ENCODE measurements at regions of chr2 and their contacts with region 1.

Region 1: DNA sequence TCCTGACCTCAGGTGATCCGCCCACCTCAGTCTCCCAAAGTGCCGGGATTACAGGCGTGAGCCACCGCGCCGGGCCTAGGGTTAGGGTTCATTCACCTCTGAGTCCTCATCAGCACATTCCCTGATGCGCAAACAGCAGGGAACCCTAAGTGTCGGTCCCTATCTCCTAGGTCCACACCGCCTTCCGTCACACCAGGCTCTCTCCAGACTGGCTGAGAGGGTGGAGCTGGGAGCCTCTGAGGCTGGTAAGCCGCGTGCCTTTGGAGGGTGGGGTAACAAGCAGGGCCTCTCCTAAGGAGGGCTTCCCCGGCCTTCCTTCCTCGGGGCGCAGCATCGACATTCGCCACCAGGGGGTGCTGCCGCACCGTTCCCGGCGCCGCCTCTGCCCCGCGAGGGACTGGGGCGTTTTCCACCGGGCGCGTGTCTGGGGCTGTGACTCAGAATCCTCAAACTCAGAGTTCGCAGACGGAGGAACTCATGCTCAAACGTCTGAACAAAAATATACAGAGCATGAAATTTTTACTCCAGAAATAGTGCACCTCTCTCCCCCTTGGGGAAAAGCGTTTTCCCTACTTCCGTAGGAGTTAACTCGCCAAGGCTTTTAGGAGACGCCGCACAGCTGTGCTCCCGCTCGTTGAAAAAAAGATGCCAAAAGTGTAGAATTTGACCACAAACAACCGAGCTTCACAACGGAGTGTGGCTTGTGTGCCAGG is 63.9 kb upstream of the ASAP2 start:
- DNase-seq: peak; percentile 55
- ATAC-seq: peak; percentile 88
- H3K4me3 ChIP-seq: peak overlapping the region; percentile 57 to 73 (median 61)
- H3K27ac ChIP-seq: no peak overlapping the region
- H3K4me1 ChIP-seq: peaks cover 43% of the 10 kb centered on the region
- H3K27me3 ChIP-seq: peaks cover 3 to 29% of the 10 kb centered on the region in 2 experiments; a peak in 3 of 5 replicates
- CTCF ChIP-seq: peak; percentile 100
- EP300 ChIP-seq: 0 out of 4 replicates have a peak, but pooled peaks of 1 of the 2 experiments have one; percentile 23
- POLR2A ChIP-seq: no peak
- RAD21 ChIP-seq: peak; percentile 99

Region 2: DNA sequence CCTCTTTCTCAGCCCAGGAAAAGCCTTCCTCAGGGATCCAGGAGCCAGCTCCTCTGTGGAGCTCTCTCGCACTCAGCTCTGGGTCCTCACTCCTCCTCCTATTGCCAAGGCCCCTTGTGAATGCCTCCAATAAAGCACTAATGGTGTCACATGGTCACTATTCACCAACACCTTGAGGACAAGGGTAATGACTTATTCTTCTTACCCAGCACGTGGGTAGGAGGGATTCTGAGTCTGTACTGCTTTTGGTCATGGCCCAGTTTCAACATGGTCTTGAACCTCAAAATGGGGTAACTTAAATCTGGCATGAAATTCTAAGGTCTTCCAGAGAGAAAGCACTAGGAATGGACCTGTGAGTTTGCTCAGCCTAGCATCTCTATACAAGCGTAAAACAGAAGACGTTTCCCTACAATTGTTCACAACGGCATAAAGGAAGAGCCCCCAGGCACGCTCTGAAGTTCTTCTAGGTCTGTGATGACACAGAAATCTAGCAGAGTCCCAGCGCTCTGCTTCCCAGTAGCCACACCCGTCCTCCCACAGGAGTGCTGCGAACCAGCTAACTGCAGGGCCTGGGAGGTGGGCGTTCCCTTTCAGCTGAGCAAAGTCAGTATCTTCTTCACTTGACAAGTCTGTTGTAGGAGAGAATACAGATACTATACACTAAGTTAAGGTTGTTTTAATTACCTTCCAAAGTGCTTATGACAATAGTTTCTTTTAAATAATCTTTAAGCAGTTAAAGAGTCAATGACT is 290.7 kb before region 1 on chr2:
- CTCF ChIA-PET with region 1: no interaction called
- POLR2A ChIA-PET with region 1: no interaction called
- in situ Hi-C with region 1: no loop called
- intact Hi-C with region 1: no loop called
- DNase-seq: no peak
- ATAC-seq: peak; percentile 61; the same call in 1 of the 3 replicates
- H3K4me3 ChIP-seq: no peak overlapping the region
- H3K27ac ChIP-seq: no peak overlapping the region
- H3K4me1 ChIP-seq: peaks cover 16% of the 10 kb centered on the region
- H3K27me3 ChIP-seq: peaks cover 0 to 24% of the 10 kb centered on the region in 2 experiments; a peak in 2 of 5 replicates
- CTCF ChIP-seq: no peak
- EP300 ChIP-seq: no peak
- POLR2A ChIP-seq: no peak
- RAD21 ChIP-seq: no peak

Region 3: DNA sequence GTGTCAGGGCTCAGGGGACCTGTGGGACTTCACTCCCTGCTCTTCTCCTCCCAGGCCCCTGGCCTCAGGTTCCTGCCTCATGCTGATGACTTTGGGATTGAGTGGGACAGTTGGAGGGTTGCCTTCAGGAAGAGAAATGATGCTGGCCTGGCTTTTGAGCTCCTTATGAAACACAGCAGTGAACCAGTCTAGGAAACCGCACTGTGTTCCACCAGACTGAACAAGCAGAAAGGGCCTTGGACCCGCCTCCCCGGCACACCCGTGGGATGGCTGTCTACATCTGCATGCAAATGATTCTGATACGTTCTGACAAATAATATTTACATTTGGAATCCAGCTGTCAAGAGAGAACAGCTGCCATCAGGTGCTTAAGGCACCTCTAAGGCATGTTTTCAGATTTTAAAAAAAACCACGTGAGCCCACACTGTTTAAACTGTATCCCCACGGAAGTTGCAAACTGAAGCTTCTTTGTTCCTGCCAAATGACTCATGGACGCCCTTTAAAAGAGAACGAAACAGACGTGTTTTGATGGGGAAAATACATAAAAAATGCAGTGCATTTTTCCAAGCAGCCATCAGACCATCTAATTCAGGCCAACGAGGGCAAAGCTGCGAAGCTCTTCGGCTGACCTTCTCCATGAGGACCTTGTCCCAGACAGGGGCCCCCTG is 36.3 kb after region 1 on chr2:
- CTCF ChIA-PET with region 1: no interaction called
- POLR2A ChIA-PET with region 1: no interaction called
- in situ Hi-C with region 1: no loop called
- intact Hi-C with region 1: no loop called
- DNase-seq: peak; percentile 93
- ATAC-seq: peak; percentile 86
- H3K4me3 ChIP-seq: peak overlapping the region in 1 of 3 experiments; percentile 2; a peak in 2 of 6 replicates
- H3K27ac ChIP-seq: peak overlapping the region; percentile 43
- H3K4me1 ChIP-seq: peaks cover 41% of the 10 kb centered on the region
- H3K27me3 ChIP-seq: peaks cover 2 to 24% of the 10 kb centered on the region in 2 experiments; a peak in 4 of 5 replicates
- CTCF ChIP-seq: no peak
- EP300 ChIP-seq: peak in 1 of 2 experiments; percentile 60; a peak in 1 of 4 replicates
- POLR2A ChIP-seq: no peak
- RAD21 ChIP-seq: no peak

Region 4: DNA sequence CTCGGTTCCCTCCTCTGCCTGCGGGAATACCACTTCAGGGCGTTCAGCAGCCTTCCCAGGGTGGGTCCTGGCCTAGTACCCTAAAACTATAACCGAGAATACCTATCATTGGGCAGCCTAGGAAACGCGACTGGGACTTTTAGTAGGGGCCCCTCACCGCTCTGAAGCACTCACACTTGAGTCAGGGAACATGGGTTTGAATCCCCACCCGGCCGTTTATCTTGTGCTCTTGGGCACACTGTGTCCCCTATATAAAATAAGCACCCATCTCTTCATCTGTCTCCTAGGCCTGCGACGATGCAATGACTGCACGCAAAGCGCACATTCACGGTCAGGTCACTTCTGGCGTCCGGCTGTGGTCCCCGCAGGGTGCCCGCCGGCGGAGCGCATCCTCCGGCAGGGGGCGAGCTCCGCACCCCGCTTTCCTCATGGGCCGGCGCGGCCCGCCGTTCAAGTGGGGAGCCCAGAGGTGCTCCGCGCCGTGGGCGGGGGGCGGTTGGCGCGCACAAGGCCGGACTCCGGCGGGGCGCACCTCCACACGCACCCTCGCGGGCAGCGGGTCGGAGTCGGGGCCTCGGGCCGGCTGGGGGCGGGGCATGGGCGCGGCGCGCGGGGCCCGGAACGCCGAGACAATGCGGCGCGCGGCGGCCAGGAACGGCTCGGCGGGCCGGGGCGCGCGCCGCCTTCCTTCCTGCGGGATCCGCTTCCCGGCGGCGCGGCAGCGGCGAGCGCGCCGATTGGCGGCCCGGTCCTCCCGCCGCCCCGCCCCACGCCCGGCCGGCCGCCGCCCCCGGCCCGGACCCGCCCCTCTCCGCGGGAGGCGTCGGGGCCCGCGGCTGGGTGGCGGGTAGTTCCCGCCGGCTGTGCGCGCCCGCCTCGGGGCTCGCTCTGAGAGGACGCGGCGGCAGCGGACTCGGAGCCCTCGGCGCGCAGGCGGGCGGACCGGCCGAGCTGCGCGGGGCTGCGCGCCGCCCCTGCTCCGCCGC is 63.5 kb after region 1 on chr2 and contains the start of gene ASAP2:
- CTCF ChIA-PET with region 1: interaction called, 8 read pairs
- POLR2A ChIA-PET with region 1: interaction called, 7 read pairs
- in situ Hi-C with region 1: loop called (anchors 10 kb)
- intact Hi-C with region 1: loop called (anchors 2 kb)
- DNase-seq: peak; percentile 59
- ATAC-seq: peak; percentile 79
- H3K4me3 ChIP-seq: peak within 1 kb of the TSS; percentile 87 to 96 (median 90)
- H3K27ac ChIP-seq: peak within 1 kb of the TSS; percentile 1
- H3K4me1 ChIP-seq: peaks cover 62% of the 10 kb centered on the region
- H3K27me3 ChIP-seq: no peaks in the 10 kb centered on the region; a peak in 1 of 5 replicates
- CTCF ChIP-seq: peak; percentile 89
- EP300 ChIP-seq: no peak
- POLR2A ChIP-seq: peak in 1 of 2 experiments; percentile 31; a peak in 1 of 4 replicates
- RAD21 ChIP-seq: peak; percentile 96
- total RNA-seq, gene ASAP2: 7.3 and 7.5 TPM in 2 replicates

Region 5: GRCh38 chr2:9370746-9371145 is 228.0 kb after region 1 on chr2:
- CTCF ChIA-PET with region 1: interaction called, 16 read pairs
- POLR2A ChIA-PET with region 1: interaction called, 5 read pairs
- in situ Hi-C with region 1: loop called (anchors 10 kb)
- intact Hi-C with region 1: loop called (anchors 1 kb)
- DNase-seq: no peak
- ATAC-seq: no peak
- H3K4me3 ChIP-seq: no peak overlapping the region
- H3K27ac ChIP-seq: no peak overlapping the region
- H3K4me1 ChIP-seq: peaks cover 24% of the 10 kb centered on the region
- H3K27me3 ChIP-seq: no peaks in the 10 kb centered on the region
- CTCF ChIP-seq: no peak
- EP300 ChIP-seq: no peak
- POLR2A ChIP-seq: no peak
- RAD21 ChIP-seq: no peak

Region 6: DNA sequence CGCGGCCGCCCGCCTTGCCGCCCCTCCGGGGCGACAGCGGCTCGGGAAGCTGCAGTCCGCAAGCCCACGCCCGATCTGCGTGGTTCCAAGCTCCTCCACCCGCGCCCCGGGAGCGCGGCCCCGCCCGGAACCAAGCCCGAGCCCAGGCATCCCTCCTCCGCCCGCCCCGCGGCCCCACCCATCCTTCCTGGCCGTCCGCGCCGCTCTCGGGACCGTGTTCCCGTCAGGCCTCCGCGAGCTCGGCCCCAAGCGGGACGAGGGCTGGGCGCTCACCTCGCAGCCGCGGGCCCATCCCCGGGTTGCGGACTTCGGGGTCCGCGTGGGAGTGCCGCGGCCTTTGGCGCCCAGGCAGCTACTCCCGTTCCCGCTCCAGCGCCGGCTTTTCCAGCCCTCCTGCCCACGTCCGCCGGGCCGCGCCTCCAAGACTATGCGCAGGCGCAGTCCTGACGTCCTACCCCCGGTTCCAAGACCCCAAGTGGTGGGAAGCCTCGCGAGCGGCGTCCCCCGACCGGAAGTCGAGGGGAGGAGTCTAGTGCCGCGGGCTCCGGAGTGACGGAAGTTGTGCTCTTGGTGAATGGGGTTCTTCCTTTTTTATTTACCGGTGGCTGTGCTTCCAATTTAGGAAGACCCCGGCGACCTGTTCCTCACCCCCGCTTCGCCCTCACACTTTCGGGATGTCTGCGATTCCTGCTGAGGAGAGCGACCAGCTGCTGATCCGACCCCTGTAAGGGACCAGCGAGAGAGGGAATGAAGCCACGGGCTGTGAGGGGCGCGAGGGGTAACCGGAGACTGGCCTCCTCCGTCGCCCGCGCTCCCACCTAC is 280.6 kb after region 1 on chr2 and contains the starts of genes CPSF3 and ITGB1BP1:
- CTCF ChIA-PET with region 1: no interaction called
- POLR2A ChIA-PET with region 1: no interaction called
- in situ Hi-C with region 1: no loop called
- intact Hi-C with region 1: loop called (anchors 1 kb)
- DNase-seq: peak; percentile 98
- ATAC-seq: peak; percentile 87
- H3K4me3 ChIP-seq: peak within 1 kb of the TSS; percentile 80 to 97 (median 86)
- H3K27ac ChIP-seq: peak within 1 kb of the TSS; percentile 75
- H3K4me1 ChIP-seq: peaks cover 57% of the 10 kb centered on the region
- H3K27me3 ChIP-seq: no peaks in the 10 kb centered on the region; a peak in 1 of 5 replicates
- CTCF ChIP-seq: peak; percentile 45; the same call in 1 of the 2 replicates
- EP300 ChIP-seq: 0 out of 4 replicates have a peak, but pooled peaks of 1 of the 2 experiments have one; percentile 5
- POLR2A ChIP-seq: peak; percentile 54 to 75; a peak in 3 of 4 replicates
- RAD21 ChIP-seq: peak; percentile 73
- total RNA-seq, gene CPSF3: 93.0 and 128 TPM in 2 replicates
- total RNA-seq, gene ITGB1BP1: 108 and 125 TPM in 2 replicates

Region 7: GRCh38 chr2:9440058-9440727 is 297.5 kb after region 1 on chr2:
- CTCF ChIA-PET with region 1: interaction called, 9 read pairs
- POLR2A ChIA-PET with region 1: no interaction called
- in situ Hi-C with region 1: loop called (anchors 10 kb)
- intact Hi-C with region 1: loop called (anchors 1 kb)
- DNase-seq: no peak
- ATAC-seq: no peak
- H3K4me3 ChIP-seq: no peak overlapping the region
- H3K27ac ChIP-seq: no peak overlapping the region
- H3K4me1 ChIP-seq: no peaks in the 10 kb centered on the region
- H3K27me3 ChIP-seq: no peaks in the 10 kb centered on the region
- CTCF ChIP-seq: no peak
- EP300 ChIP-seq: no peak
- POLR2A ChIP-seq: no peak
- RAD21 ChIP-seq: no peak